ENCODE measurements at regions of chr16 and their contacts with region 1.

Region 1: GRCh38 chr16:68936736-68937631 is 93.7 kb downstream of the TANGO6 start:
- DNase-seq: peak; percentile 95
- H3K4me3 Mint-ChIP-seq: no peak overlapping the region
- H3K27ac Mint-ChIP-seq: peak overlapping the region; percentile 94
- H3K4me1 Mint-ChIP-seq: peaks cover 28% of the 10 kb centered on the region
- H3K27me3 Mint-ChIP-seq: no peaks in the 10 kb centered on the region
- CTCF ChIP-seq: no peak

Region 2: DNA sequence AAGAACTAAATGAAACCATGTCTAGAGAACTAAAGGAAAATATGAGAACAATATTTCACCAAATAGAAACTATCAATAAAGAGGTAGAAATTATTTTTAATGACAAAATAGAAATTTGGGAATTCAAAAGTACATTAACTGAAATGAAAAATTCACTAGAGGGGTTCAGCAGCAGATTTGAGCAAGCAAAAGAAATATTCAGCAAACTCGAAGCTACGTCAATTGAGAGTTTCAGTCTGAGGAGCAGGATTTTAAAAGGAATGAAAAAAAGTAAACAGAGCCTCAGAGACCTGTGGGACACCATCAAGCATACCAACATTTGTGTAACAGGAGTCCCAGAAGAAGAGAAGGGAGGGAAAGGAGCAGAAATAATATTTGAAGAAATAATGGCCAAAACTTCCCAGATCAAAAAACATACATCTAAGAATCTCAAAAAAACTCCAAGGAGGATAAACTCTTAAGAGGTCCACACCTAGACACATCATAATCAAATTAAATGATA is 359.6 kb before region 1 on chr16:
- CTCF ChIA-PET with region 1: no interaction called
- POLR2A ChIA-PET with region 1: no interaction called
- intact Hi-C with region 1: no loop called
- DNase-seq: no peak
- H3K4me3 Mint-ChIP-seq: no peak overlapping the region
- H3K27ac Mint-ChIP-seq: no peak overlapping the region
- H3K4me1 Mint-ChIP-seq: no peaks in the 10 kb centered on the region
- H3K27me3 Mint-ChIP-seq: no peaks in the 10 kb centered on the region
- CTCF ChIP-seq: no peak

Region 3: DNA sequence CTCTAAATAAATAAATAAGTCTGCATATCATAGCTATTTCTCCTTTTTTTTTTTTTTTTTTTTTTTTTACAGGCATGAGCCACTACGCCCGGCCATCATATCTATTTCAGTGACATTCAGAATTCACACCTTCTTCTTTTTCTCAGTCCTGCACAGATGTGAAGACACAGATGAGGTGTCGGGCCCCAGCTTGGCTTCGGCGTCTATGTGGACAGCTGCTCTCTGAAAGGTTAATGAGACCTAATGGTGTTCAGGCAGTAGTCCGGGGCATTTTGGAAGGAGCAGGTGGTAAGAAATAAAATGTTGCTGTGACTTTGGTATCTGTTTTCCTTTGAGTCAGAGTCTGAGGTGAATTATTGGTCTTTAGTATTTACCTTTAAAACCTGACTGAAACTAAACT is 70.1 kb before region 1 on chr16:
- CTCF ChIA-PET with region 1: no interaction called
- POLR2A ChIA-PET with region 1: no interaction called
- intact Hi-C with region 1: no loop called
- DNase-seq: no peak
- H3K4me3 Mint-ChIP-seq: no peak overlapping the region
- H3K27ac Mint-ChIP-seq: no peak overlapping the region
- H3K4me1 Mint-ChIP-seq: peaks cover 6% of the 10 kb centered on the region
- H3K27me3 Mint-ChIP-seq: no peaks in the 10 kb centered on the region
- CTCF ChIP-seq: no peak

Region 4: GRCh38 chr16:68921654-68922053 is 15.3 kb before region 1 on chr16:
- CTCF ChIA-PET with region 1: interaction called, 4 read pairs
- POLR2A ChIA-PET with region 1: interaction called, 46 read pairs
- intact Hi-C with region 1: no loop called
- DNase-seq: peak; percentile 89
- H3K4me3 Mint-ChIP-seq: peak overlapping the region; percentile 3
- H3K27ac Mint-ChIP-seq: peak overlapping the region; percentile 95
- H3K4me1 Mint-ChIP-seq: peaks cover 23% of the 10 kb centered on the region
- H3K27me3 Mint-ChIP-seq: no peaks in the 10 kb centered on the region
- CTCF ChIP-seq: no peak

Region 5: DNA sequence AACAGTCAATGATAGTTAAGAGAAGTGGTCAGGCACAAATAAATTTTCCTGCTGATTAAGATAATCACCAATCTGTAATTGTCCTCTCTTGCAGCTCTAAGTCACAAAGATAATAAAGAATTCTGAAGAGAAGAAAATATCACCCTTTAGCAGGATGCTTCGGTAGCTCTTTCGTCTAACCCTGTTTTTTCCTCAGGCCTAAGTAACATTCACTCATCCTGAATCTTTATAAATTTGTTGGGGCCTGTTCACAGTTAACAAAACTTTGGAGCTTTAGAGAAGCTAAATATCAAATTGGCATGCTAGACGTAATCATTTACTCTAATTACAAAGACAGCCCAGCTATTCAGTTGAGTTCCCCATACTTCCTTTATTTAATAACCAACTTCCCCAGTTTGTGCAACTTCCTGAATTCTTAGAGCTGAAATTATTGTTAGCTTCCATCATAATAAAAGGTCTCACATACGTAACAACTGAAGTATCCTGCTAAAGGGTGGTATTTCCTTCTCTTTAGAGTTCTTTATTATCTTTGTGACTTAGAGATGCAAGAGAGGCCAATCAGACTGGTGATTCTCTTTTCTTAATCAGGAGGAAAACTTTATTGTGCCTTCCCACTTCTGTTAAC is 24.9 kb after region 1 on chr16:
- CTCF ChIA-PET with region 1: no interaction called
- POLR2A ChIA-PET with region 1: no interaction called
- intact Hi-C with region 1: no loop called
- DNase-seq: no peak
- H3K4me3 Mint-ChIP-seq: no peak overlapping the region
- H3K27ac Mint-ChIP-seq: no peak overlapping the region
- H3K4me1 Mint-ChIP-seq: no peaks in the 10 kb centered on the region
- H3K27me3 Mint-ChIP-seq: no peaks in the 10 kb centered on the region
- CTCF ChIP-seq: no peak

Measured in MCF 10A (cell line).